ENCODE measurements at regions of chr2 and their contacts with region 1.

Region 1: GRCh38 chr2:240437861-240438809 is 2.7 kb downstream of the GPC1 start:
- DNase-seq: peak; percentile 59 to 77 (median 75)
- ATAC-seq: peak; percentile 48
- H3K4me3 ChIP-seq: no peak overlapping the region
- H3K4me1 ChIP-seq: peaks cover 15% of the 10 kb centered on the region
- CTCF ChIP-seq: peak; percentile 89

Region 2: DNA sequence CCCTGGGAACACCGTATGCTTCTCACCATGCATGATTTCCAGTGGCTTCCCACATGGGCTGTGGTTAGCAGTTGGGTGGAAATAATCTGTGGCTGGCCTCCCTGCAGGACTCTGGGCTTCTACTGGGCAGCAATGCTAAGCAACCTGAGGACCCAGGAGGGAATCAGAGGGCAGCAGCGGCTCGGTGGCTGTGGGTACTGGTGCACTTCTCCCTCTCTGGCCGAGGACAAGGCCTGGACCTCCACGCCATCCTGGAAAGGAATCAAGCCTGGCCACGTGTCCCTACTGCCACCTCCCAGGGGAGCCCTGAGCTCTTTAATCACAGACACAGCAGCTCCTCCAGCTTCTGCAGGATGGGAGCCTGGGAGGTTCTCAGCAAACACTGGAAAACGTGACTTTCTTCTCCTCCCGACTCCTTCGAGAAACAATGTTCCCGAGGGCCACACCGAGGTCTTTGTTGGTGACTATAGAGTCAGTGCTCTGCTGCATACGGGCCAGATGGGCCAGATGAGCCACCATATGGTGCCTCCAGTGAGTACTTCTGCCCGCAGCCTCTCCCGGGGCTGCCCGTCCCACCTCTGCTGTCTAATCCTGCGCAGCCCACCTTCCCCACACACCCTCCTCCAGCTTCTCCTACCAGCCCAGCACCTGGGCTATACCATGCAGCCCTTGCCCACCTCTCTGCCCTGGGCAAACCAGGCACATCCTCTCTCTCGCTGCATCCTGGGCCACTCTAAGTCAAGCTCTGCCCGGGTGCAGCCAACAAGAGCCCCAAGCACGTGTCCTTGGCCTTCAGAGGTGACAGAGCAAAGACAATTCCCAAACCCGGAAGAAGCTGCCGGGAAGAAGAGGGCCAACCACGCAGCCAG is 254.9 kb before region 1 on chr2:
- intact Hi-C with region 1: no loop called
- DNase-seq: no peak
- ATAC-seq: no peak
- H3K4me3 ChIP-seq: no peak overlapping the region
- H3K4me1 ChIP-seq: no peaks in the 10 kb centered on the region
- CTCF ChIP-seq: no peak

Region 3: GRCh38 chr2:240232961-240233893 is 204.9 kb before region 1 on chr2:
- intact Hi-C with region 1: loop called (anchors 2 kb)
- DNase-seq: peak; percentile 80 to 84 (median 83)
- ATAC-seq: peak; percentile 86
- H3K4me3 ChIP-seq: no peak overlapping the region
- H3K4me1 ChIP-seq: peaks cover 10% of the 10 kb centered on the region
- CTCF ChIP-seq: peak; percentile 42

Region 4: GRCh38 chr2:240277073-240277806 is 160.9 kb before region 1 on chr2:
- intact Hi-C with region 1: no loop called
- DNase-seq: no peak
- ATAC-seq: peak; percentile 29
- H3K4me3 ChIP-seq: no peak overlapping the region
- H3K4me1 ChIP-seq: no peaks in the 10 kb centered on the region
- CTCF ChIP-seq: no peak

Measured in mucosa of descending colon (tissue), 3 donors.